ENCODE measurements at regions of chr1 and their contacts with region 1.

Region 1: DNA sequence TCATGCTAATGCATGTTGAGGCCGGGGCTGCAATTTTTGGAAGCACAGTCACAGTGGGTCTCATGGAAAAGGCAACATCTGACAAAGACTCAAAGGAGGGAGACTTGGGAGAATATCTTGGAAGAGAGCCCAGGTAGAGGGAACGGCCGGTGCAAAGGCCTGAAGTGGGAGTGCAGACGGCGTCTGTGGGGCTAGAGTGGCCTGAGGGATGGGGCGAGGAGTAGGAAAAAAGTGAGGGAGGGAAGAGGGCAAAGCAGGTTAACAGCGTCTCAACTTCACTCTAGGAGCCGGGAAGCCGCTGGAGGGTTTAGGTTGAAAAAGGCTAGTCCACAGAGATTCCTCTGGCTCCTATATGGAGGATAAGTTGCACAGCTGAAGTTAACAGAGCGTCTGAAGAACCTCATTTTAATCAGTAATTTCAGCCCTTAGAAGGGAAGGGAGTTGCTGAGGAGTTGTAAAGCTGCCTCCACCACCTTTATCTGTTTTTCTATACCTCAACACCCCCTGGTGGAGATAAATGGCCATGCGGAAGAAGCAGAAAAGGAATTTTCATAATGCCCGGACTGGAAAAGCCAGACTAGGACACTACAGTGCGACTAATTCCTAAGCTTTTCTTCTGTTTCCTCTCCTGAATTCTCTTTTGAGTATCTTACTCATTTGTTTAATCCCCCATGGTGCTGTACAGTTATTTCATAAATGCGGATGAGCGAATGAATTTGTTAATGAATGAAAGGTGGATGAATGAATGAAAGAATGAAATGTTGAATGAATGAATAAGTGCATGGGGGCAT is 78.7 kb upstream of the ZNF281 start:
- DNase-seq: no peak
- H3K4me3 ChIP-seq: no peak overlapping the region
- H3K27ac ChIP-seq: no peak overlapping the region
- H3K4me1 ChIP-seq: peaks cover 0 to 6% (median 5%) of the 10 kb centered on the region in 4 donors
- H3K27me3 ChIP-seq: no peaks in the 10 kb centered on the region
- CTCF ChIP-seq: peak; percentile 80 to 85 (median 81)
- EP300 ChIP-seq: no peak
- POLR2A ChIP-seq: no peak

Region 2: DNA sequence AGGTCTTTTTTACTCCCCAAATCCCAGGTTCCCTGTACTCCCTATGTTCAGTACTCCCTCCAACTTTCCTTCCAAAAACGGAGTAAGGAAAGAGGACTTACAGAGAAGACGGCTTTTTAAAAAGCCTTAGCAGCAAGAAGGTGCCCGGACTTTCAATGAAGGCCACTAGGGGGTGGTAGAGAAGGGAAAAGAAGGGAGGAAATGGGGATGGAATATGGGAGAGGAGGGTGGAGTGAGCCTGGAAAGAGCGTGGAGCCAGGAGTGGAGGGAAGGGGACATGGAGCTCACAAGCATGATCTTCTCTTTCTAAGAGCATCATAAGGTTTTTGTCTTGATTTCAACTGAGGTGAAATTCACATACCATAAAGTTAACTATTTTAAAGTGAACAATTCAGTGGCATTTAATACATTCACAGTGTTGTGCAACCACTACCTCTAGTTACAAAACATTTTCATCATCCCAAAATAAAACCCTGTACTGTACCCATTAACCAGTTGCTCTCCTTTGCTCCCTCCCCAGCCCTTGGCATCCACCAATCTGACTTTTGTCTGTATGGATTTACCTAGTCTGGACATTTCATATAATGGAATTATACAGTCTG is 208.7 kb before region 1 on chr1:
- intact Hi-C with region 1: loop called (anchors 5 kb)
- DNase-seq: no peak
- H3K4me3 ChIP-seq: no peak overlapping the region
- H3K27ac ChIP-seq: no peak overlapping the region
- H3K4me1 ChIP-seq: peaks cover 0 to 7% (median 0%) of the 10 kb centered on the region in 4 donors
- H3K27me3 ChIP-seq: no peaks in the 10 kb centered on the region
- CTCF ChIP-seq: peak; percentile 38 to 65 (median 41)
- EP300 ChIP-seq: no peak
- POLR2A ChIP-seq: no peak

Region 3: GRCh38 chr1:200302192-200302920 is 186.2 kb before region 1 on chr1:
- intact Hi-C with region 1: loop called (anchors 10 kb)
- DNase-seq: no peak
- H3K4me3 ChIP-seq: peak overlapping the region; percentile 64 to 73 (median 69)
- H3K27ac ChIP-seq: peak overlapping the region in 1 of 4 donors; percentile 27
- H3K4me1 ChIP-seq: peaks cover 5 to 21% (median 17%) of the 10 kb centered on the region in 4 donors
- H3K27me3 ChIP-seq: no peaks in the 10 kb centered on the region
- CTCF ChIP-seq: no peak
- EP300 ChIP-seq: no peak
- POLR2A ChIP-seq: no peak